Activated B cell treated with CpG ODN at 0.5 μM for 24 hours (primary cell): ENCODE measurements at regions of chr2 and their contacts with region 1.

Region 1: DNA sequence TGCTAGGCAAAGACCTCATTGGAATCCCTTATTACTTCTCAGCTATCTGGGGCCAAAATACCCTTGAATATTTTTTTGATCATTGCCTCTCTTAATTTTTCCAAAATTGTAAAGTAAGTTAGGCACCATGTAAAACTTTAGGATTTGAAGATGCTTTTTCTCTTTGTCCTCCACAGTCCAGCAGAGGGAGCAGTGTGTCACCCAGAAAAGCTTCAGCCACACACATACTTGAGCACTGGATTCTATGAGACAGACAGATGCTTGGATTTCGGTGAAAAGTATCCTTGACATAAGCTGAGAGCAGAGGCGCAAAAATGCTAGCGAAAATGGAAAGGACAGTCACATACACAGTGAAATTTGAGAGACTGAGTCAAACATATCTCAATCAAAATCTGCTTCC is 74.7 kb upstream of the KCNJ3 start:
- DNase-seq: no peak
- ATAC-seq: no peak
- H3K4me3 Mint-ChIP-seq: no peak overlapping the region
- H3K27ac Mint-ChIP-seq: no peak overlapping the region
- H3K4me1 Mint-ChIP-seq: no peaks in the 10 kb centered on the region
- H3K27me3 Mint-ChIP-seq: no peaks in the 10 kb centered on the region
- CTCF ChIP-seq: no peak

Region 2: DNA sequence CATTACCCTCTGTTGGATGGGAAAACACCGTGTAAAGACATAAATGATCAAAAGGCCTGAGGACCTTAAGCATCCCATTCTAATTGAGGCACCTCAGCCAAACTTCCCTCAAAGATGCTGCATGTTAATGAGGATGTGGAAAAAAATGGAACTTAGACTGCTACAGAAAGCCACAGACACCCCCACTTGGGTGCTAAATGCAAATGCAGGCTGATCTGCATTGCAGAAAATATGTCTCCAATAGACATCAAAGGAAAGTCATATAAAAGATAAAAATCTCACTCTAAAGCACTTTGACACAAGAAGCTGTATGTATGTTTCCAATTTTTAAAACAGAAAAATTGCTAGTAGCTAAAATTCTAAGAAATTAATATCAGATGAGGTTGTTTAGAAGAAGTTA is 579.4 kb after region 1 on chr2:
- CTCF ChIA-PET with region 1: no interaction called
- POLR2A ChIA-PET with region 1: no interaction called
- intact Hi-C with region 1: no loop called
- DNase-seq: no peak
- ATAC-seq: no peak
- H3K4me3 Mint-ChIP-seq: no peak overlapping the region
- H3K27ac Mint-ChIP-seq: no peak overlapping the region
- H3K4me1 Mint-ChIP-seq: no peaks in the 10 kb centered on the region
- H3K27me3 Mint-ChIP-seq: no peaks in the 10 kb centered on the region
- CTCF ChIP-seq: no peak

Region 3: GRCh38 chr2:155223781-155224406 is 600.1 kb after region 1 on chr2:
- CTCF ChIA-PET with region 1: no interaction called
- POLR2A ChIA-PET with region 1: no interaction called
- intact Hi-C with region 1: loop called (anchors 2 kb)
- DNase-seq: no peak
- ATAC-seq: no peak
- H3K4me3 Mint-ChIP-seq: no peak overlapping the region
- H3K27ac Mint-ChIP-seq: no peak overlapping the region
- H3K4me1 Mint-ChIP-seq: no peaks in the 10 kb centered on the region
- H3K27me3 Mint-ChIP-seq: no peaks in the 10 kb centered on the region
- CTCF ChIP-seq: no peak